WTC11 (cell line): ENCODE measurements at regions of chr15 and their contacts with region 1.

Region 1: DNA sequence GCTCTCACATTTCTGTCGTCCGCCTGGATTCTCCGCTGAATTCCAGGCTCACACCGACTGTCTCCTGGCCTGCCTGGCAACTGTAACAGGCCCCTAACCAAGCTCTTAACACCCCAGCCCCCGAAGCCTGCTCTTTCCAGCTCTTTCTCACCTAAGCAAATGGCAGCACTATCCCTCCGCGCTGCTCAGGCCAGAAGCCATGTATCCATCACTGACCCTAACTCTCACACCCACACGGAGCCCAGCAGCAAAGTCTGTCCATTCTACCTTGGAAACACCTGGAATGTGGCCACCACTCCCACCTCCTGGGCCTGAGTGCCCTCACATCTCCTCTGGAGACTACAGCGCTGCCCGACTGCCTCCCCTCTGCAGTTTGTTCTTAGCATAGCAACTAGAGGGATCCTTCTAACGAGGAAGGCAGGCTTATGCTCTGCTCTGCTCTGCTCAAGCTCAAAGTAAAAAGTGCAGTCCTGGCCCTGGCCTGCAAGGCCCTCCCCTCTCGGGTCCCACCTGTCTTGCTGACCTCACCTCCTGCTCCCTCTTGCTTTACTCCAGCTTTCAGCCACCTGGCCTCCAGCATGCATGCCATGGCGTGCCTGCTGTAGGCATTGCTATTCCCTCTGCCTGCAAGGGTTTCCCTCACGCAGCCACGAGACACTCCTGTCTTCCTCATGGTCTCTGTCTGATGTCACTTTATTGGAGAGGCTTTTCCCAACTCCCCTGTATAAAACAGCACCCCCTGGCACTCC is 27.2 kb downstream of the FEM1B start:
- DNase-seq: peak; percentile 46
- ATAC-seq: peak; percentile 68
- H3K4me3 Mint-ChIP-seq: no peak overlapping the region
- H3K27ac Mint-ChIP-seq: peak overlapping the region; percentile 55
- H3K4me1 Mint-ChIP-seq: peaks cover 39% of the 10 kb centered on the region
- H3K27me3 Mint-ChIP-seq: no peaks in the 10 kb centered on the region
- CTCF ChIP-seq: no peak

Region 2: DNA sequence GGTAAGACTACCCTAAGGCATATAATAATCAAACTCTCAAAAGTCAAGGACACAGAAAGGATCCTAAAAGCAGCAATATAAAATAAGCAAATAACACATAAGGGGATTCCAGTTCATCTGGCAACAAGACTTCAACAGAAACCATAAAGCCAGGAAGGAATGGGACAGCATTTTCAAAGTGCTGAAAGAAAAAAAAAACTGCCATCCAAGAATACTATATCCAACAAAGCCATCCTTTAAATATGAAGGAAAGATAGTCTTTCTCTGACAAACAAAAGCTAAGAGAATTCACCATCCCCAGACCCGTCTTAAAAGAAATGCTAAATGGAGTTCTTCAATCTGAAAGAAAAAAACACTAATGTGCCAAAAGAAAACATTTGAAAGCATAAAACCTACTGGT is 60.5 kb before region 1 on chr15:
- CTCF ChIA-PET with region 1: interaction called, 10 read pairs
- POLR2A ChIA-PET with region 1: no interaction called
- DNase-seq: no peak
- ATAC-seq: no peak
- H3K4me3 Mint-ChIP-seq: no peak overlapping the region
- H3K27ac Mint-ChIP-seq: no peak overlapping the region
- H3K4me1 Mint-ChIP-seq: peaks cover 14% of the 10 kb centered on the region
- H3K27me3 Mint-ChIP-seq: no peaks in the 10 kb centered on the region; the same call in 1 of the 2 replicates
- CTCF ChIP-seq: no peak

Region 3: GRCh38 chr15:68316061-68316804 is 11.5 kb after region 1 on chr15:
- CTCF ChIA-PET with region 1: interaction called, 107 read pairs
- POLR2A ChIA-PET with region 1: interaction called, 3 read pairs
- DNase-seq: peak; percentile 67
- ATAC-seq: peak; percentile 82
- H3K4me3 Mint-ChIP-seq: 0 out of 2 replicates have a peak overlapping the region, but pooled peaks have one; percentile 24
- H3K27ac Mint-ChIP-seq: no peak overlapping the region
- H3K4me1 Mint-ChIP-seq: peaks cover 23% of the 10 kb centered on the region
- H3K27me3 Mint-ChIP-seq: no peaks in the 10 kb centered on the region
- CTCF ChIP-seq: no peak

Region 4: DNA sequence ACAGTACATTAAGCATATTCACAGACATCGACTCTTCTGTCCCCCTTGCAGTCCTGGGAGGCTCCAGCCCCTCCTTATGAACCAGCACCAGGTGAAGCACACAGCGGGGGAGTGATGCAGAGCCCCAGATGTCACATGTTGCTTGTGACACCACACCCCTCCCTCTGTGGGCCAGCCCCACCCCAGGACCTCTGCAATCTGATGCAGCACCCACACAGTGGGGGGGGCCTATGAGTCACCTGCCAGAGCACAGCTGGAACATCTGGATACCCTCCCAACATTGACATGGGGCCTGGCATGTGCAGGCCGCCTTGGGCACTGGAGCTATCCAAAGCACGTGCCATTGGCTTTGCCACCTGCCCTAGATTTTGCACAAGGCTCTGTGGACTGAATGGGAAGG is 43.3 kb after region 1 on chr15:
- CTCF ChIA-PET with region 1: interaction called, 22 read pairs
- POLR2A ChIA-PET with region 1: no interaction called
- DNase-seq: no peak
- ATAC-seq: no peak
- H3K4me3 Mint-ChIP-seq: no peak overlapping the region
- H3K27ac Mint-ChIP-seq: no peak overlapping the region
- H3K4me1 Mint-ChIP-seq: peaks cover 16% of the 10 kb centered on the region
- H3K27me3 Mint-ChIP-seq: no peaks in the 10 kb centered on the region
- CTCF ChIP-seq: no peak

Region 5: GRCh38 chr15:68431792-68432401 is 127.1 kb after region 1 on chr15 and contains the start of gene ITGA11:
- CTCF ChIA-PET with region 1: interaction called, 18 read pairs
- POLR2A ChIA-PET with region 1: no interaction called
- DNase-seq: peak; percentile 79
- ATAC-seq: peak; percentile 93
- H3K4me3 Mint-ChIP-seq: peak within 1 kb of the TSS; percentile 72
- H3K27ac Mint-ChIP-seq: no peak within 1 kb of the TSS
- H3K4me1 Mint-ChIP-seq: peaks cover 13% of the 10 kb centered on the region
- H3K27me3 Mint-ChIP-seq: peaks cover 72% of the 10 kb centered on the region
- CTCF ChIP-seq: no peak
- total RNA-seq, gene ITGA11: 0.11 to 0.60 TPM (median 0.15 TPM) in 3 replicates